A549 (cell line): ENCODE measurements at regions of chr1 and their contacts with region 1.

Region 1: GRCh38 chr1:31745096-31745945 is 18.8 kb downstream of the ADGRB2 start:
- DNase-seq: peak; percentile 54 to 77
- ATAC-seq: peak; percentile 85 to 95; a peak in 5 of 6 replicates
- H3K4me3 ChIP-seq: no peak overlapping the region
- H3K27ac ChIP-seq: peak overlapping the region in 1 of 2 experiments; percentile 21; a peak in 1 of 6 replicates
- H3K4me1 ChIP-seq: peaks cover 5% of the 10 kb centered on the region; the same call in 1 of the 3 replicates
- CTCF ChIP-seq: peak; percentile 42; the same call in 2 of the 3 replicates
- EP300 ChIP-seq: no peak
- POLR2A ChIP-seq: no peak
- RAD21 ChIP-seq: peak; percentile 68 to 73

Region 2: GRCh38 chr1:31663622-31664452 is 81.5 kb before region 1 on chr1:
- CTCF ChIA-PET with region 1: interaction called, 102 read pairs
- POLR2A ChIA-PET with region 1: interaction called, 3 read pairs
- DNase-seq: peak; percentile 30 to 74
- ATAC-seq: peak; percentile 49 to 66; a peak in 5 of 6 replicates
- H3K4me3 ChIP-seq: no peak overlapping the region
- H3K27ac ChIP-seq: peak overlapping the region in 1 of 2 experiments; percentile 91; a peak in 3 of 6 replicates
- H3K4me1 ChIP-seq: peaks cover 33% of the 10 kb centered on the region
- CTCF ChIP-seq: peak; percentile 76
- EP300 ChIP-seq: no peak
- POLR2A ChIP-seq: no peak
- RAD21 ChIP-seq: peak; percentile 95 to 96

Region 3: DNA sequence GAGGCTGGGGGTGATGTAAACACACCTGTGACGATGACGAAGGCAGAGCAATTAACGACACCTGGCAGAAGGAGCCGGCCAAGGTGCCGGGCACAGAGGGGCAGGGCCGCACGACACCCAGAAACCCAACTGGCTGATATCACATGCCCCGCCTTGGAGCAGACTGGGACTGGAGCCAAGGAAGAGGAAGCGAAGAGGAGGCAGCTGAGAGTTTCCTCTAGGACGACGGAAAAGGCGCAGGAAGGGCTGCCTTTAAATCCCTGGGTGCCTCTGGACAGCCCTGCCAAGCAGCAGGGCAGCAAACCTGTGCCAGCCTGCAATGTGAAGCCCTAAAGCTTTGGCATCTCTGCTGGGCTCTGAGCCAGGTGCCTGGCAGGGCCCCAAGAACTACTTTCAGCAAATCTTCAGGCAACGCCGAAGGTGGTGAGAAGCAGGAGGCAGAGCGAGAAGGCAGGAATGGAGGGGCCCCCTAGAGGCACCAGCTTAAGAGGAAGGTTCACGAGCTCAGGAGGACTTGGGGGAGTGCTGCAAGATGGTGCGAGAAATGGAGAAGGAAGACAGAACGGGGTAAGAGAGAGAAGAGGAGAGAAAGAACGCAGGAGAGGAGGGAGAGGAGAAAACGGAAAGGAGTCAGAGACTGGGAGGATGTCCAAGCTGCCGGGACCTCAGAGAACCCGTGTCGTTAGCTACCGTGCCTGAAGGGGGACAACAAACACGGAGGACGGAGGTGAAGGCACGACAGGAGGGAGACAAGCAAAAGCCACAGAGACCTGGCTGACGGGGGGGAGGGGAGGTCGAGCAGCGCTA is 75.3 kb before region 1 on chr1:
- CTCF ChIA-PET with region 1: interaction called, 102 read pairs
- POLR2A ChIA-PET with region 1: interaction called, 3 read pairs
- DNase-seq: peak; percentile 22 to 40
- ATAC-seq: peak; percentile 20 to 58; a peak in 3 of 6 replicates
- H3K4me3 ChIP-seq: no peak overlapping the region
- H3K27ac ChIP-seq: peak overlapping the region; percentile 28 to 91
- H3K4me1 ChIP-seq: peaks cover 42% of the 10 kb centered on the region
- CTCF ChIP-seq: no peak; the same call in 2 of the 3 replicates
- EP300 ChIP-seq: no peak
- POLR2A ChIP-seq: no peak
- RAD21 ChIP-seq: 0 out of 5 replicates have a peak, but pooled peaks of 1 of the 2 experiments have one; percentile 5

Region 4: GRCh38 chr1:31762726-31763670 is 17.7 kb after region 1 on chr1:
- CTCF ChIA-PET with region 1: interaction called, 14 read pairs
- POLR2A ChIA-PET with region 1: interaction called, 3 read pairs
- DNase-seq: peak; percentile 70 to 76
- ATAC-seq: peak; percentile 62 to 76
- H3K4me3 ChIP-seq: peak overlapping the region; percentile 67
- H3K27ac ChIP-seq: peak overlapping the region; percentile 76 to 98
- H3K4me1 ChIP-seq: peaks cover 40% of the 10 kb centered on the region
- CTCF ChIP-seq: peak; percentile 64
- EP300 ChIP-seq: no peak
- POLR2A ChIP-seq: no peak
- RAD21 ChIP-seq: peak; percentile 43 to 64

Region 5: GRCh38 chr1:31795801-31796621 is 50.7 kb after region 1 on chr1:
- CTCF ChIA-PET with region 1: no interaction called
- POLR2A ChIA-PET with region 1: no interaction called
- DNase-seq: peak in 1 of 2 experiments; percentile 17
- ATAC-seq: no peak
- H3K4me3 ChIP-seq: no peak overlapping the region
- H3K27ac ChIP-seq: no peak overlapping the region
- H3K4me1 ChIP-seq: peaks cover 28% of the 10 kb centered on the region
- CTCF ChIP-seq: no peak
- EP300 ChIP-seq: no peak
- POLR2A ChIP-seq: no peak
- RAD21 ChIP-seq: no peak

Region 6: GRCh38 chr1:31831397-31832378 is 86.4 kb after region 1 on chr1:
- CTCF ChIA-PET with region 1: no interaction called
- POLR2A ChIA-PET with region 1: no interaction called
- DNase-seq: no peak
- ATAC-seq: no peak
- H3K4me3 ChIP-seq: no peak overlapping the region
- H3K27ac ChIP-seq: no peak overlapping the region
- H3K4me1 ChIP-seq: no peaks in the 10 kb centered on the region
- CTCF ChIP-seq: no peak
- EP300 ChIP-seq: no peak
- POLR2A ChIP-seq: no peak
- RAD21 ChIP-seq: no peak